ENCODE measurements at regions of chr7 and their contacts with region 1.

Region 1: DNA sequence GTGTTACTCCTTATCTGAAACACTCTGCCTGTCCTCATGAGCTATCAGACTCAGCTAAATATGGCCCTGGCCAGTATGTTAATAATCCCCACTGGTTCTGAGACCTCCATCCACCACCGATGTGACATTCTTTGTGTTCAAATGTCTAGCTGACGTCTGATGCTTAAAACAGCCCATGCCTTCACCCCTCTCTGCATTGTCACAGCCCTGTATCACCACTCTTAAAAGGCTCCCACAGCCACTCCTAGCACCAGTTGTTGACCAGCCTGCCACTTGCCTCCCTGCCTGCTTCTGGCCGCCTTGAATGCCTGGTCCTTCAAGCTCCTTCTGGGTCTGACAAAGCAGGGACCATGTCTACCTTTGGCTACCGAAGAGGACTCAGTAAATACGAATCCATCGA is at the start of gene LMOD2:
- DNase-seq: no peak
- H3K4me3 ChIP-seq: no peak within 1 kb of the TSS
- H3K27me3 ChIP-seq: peaks cover 1% of the 10 kb centered on the region; the same call in 1 of the 2 replicates
- CTCF ChIP-seq: no peak
- polyA plus RNA-seq, gene LMOD2: not detected in 2 replicates

Region 2: DNA sequence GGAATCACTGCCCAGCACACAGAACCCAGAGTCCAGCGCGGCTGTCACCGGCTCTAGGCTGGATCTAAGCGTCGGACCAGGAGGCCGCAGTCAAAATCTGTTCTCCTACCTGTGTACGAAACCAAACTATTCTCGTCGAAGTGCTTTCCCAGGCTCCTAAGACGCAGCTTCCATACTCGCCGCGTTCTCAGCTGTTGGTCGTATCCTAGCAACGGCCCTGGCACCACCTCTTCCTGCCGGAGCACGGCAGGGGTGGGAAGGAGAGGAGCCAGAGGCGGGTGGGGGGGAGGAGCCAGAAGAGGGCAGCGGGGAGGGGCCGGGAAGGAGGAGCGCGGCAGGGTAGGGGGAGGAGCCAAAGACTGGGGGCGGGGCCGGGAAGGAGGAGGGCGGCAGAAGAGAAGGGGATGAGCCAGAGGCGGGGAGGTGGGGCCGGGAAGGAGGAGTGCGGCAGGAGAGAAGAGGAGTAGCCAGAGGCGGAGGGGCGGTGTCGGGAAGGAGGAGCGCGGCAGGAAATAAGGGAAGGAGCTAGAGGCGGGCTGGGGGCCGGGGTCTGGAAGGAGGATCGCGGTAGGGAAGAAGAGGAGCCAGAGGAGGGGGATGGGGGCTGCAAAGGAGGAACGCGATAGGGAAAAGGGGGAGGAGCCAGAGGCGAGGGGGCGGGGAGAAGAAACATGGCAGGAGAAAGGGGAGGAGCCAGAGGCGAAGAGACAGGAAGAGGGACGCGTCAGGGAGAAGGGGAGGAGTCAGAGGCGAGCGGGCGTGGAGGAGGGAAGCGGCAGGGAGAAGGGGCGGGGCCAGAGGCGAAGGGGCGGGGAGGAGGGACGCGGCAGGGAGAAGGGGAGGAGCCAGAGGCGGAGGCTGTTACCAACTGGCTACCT is 121.0 kb before region 1 on chr7 and contains the start of gene IQUB:
- CTCF ChIA-PET with region 1: no interaction called
- POLR2A ChIA-PET with region 1: interaction called, 13 read pairs
- DNase-seq: peak; percentile 70
- H3K4me3 ChIP-seq: peak within 1 kb of the TSS; percentile 79
- H3K27me3 ChIP-seq: no peaks in the 10 kb centered on the region
- CTCF ChIP-seq: no peak
- polyA plus RNA-seq, gene IQUB: 0.02 and 0.05 TPM in 2 replicates

Region 3: GRCh38 chr7:123643495-123644441 is 11.8 kb before region 1 on chr7:
- CTCF ChIA-PET with region 1: interaction called, 11 read pairs
- POLR2A ChIA-PET with region 1: no interaction called
- DNase-seq: peak; percentile 2
- H3K4me3 ChIP-seq: peak overlapping the region; percentile 15
- H3K27me3 ChIP-seq: no peaks in the 10 kb centered on the region
- CTCF ChIP-seq: no peak